GM18951 (cell line): ENCODE measurements at regions of chr19 and their contacts with region 1.

Region 1: DNA sequence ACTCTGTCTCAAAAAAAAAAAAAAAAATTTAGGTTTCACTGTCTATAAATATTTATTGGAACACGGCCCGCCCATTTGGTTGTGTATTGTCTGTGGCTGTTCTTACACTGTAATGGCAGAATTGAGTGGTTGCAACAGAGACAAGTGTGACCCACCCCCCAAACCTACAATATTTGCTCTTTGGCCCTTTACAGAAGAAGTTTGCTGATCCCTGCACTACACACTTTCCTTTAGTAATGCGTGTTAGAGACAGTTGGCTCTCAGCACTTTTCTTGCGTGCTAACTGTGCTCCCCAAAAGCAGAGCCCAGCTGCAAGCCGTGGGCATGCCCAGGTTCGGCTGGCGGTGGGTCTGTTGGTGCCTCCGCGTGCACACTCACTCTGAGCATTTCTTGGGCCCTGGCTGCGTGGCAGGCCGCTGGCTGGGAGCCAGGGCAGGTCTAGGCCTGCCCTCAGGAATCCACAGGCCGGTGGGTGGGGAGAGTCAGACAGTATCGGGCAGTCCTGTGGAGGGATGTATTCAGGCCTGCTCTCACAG is 72.6 kb downstream of the SIPA1L3 start:
- POLR2A ChIP-seq: peak; percentile 32

Region 2: DNA sequence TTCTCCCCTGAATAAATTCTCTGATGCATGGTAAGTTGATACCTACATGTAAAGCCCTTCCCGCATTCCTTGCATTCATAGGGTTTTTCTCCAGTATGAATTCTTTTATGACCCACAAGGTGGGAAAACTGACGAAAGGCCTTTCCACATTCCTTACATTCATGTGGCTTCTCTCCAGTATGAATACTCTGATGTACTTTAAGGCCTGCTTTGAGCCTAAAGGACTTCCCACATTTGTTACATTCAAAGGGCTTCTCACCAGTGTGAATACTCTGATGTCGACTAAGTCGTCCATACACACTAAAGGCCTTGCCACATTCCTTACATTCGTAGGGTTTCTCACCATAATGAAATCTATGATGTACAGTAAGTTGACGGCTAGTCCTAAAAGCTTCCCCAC is 280.5 kb before region 1 on chr19:
- in situ Hi-C with region 1: no loop called
- POLR2A ChIP-seq: no peak

Region 3: DNA sequence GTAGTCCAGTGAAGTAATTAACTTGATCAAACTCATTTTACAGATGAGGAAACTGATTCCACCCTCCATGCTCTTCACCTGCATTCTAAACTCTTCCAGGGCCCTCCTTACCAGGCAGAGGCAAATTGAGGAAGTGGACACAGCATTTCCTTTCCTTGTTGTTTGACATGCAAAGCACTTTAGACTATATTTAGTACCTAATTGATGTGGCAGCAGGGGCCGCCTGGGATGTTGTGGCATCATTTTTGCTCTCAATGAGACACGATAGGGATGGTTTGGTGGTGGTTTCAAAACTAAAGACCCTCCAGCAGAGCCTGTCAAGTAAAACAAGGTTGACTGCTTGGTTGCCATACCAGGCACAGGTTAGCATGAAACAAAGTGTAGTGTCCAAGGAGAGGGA is 64.7 kb before region 1 on chr19:
- in situ Hi-C with region 1: loop called (anchors 5 kb)
- POLR2A ChIP-seq: peak; percentile 42

Region 4: GRCh38 chr19:38044267-38045111 is 64.9 kb after region 1 on chr19:
- in situ Hi-C with region 1: no loop called
- POLR2A ChIP-seq: no peak